ENCODE measurements at regions of chr7 and their contacts with region 1.

Region 1: GRCh38 chr7:142418326-142418725 is 160.5 kb upstream of the PRSS58 start:
- DNase-seq: no peak
- ATAC-seq: no peak
- H3K4me3 Mint-ChIP-seq: no peak overlapping the region
- H3K27ac Mint-ChIP-seq: no peak overlapping the region
- H3K4me1 Mint-ChIP-seq: peaks cover 12% of the 10 kb centered on the region
- H3K27me3 Mint-ChIP-seq: peaks cover 4% of the 10 kb centered on the region

Region 2: GRCh38 chr7:142371586-142372377 is 46.5 kb before region 1 on chr7:
- CTCF ChIA-PET with region 1: no interaction called
- POLR2A ChIA-PET with region 1: no interaction called
- DNase-seq: no peak
- ATAC-seq: no peak
- H3K4me3 Mint-ChIP-seq: no peak overlapping the region
- H3K27ac Mint-ChIP-seq: no peak overlapping the region
- H3K4me1 Mint-ChIP-seq: no peaks in the 10 kb centered on the region
- H3K27me3 Mint-ChIP-seq: peaks cover 24% of the 10 kb centered on the region

Region 3: GRCh38 chr7:142438235-142438922 is 20.1 kb after region 1 on chr7:
- CTCF ChIA-PET with region 1: interaction called, 13 read pairs
- POLR2A ChIA-PET with region 1: no interaction called
- DNase-seq: peak; percentile 51
- ATAC-seq: no peak
- H3K4me3 Mint-ChIP-seq: no peak overlapping the region
- H3K27ac Mint-ChIP-seq: no peak overlapping the region
- H3K4me1 Mint-ChIP-seq: peaks cover 56% of the 10 kb centered on the region
- H3K27me3 Mint-ChIP-seq: no peaks in the 10 kb centered on the region